Tibial artery (tissue), 4 donors: ENCODE measurements at regions of chr10 and their contacts with region 1.

Region 1: DNA sequence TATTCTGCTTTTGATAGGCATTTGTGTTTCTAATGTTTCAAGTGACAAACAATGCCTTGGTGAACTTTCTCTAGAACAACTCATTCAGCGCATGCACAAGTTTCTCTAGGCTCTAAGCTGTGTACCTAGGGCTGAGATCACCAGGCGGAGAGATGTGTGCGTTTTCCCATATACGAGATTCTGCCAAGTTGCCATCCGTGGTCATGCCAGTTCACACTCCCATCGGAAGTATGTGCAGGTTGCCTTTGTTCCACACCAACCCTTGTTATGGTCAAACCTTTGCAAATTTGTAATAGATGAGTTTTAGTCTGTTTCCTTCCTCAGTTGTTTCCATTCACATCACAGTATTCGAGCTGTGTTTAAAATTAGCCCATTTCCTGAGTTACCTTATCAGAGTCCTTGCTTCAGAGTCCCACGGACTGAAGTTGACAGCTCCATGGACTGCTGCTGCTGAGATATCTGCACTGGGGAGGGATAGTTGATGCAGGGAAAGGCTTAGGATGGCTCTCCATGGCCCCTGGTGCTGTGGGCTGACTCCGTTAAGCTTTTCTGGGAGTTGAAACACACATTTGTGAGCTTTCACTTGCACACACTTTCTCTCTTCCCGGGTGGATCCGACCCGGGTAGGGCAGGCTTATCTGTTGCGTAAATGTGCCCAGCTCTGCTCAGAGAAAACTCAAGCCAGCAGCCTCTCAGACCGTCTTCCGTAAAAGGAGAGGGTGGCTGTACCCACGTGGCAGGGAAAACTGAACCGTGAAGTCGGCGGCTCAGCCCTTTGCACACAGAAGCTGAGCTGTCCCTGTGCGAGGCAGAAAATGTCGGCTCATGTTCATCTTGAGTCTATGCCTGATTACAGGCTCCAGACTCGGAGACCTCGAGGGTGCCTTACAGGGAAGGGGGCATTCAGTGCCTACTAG is 49.4 kb downstream of the HK1 start:
- DNase-seq: peak; percentile 77 to 93
- H3K4me3 ChIP-seq: peak overlapping the region; percentile 36 to 45
- H3K27ac ChIP-seq: peak overlapping the region; percentile 79 to 87
- H3K4me1 ChIP-seq: peaks cover 4 to 98% (median 63%) of the 10 kb centered on the region in 4 donors
- H3K27me3 ChIP-seq: no peaks in the 10 kb centered on the region
- CTCF ChIP-seq: no peak

Region 2: GRCh38 chr10:69360485-69361324 is 33.0 kb after region 1 on chr10:
- intact Hi-C with region 1: loop called (anchors 5 kb)
- DNase-seq: peak; percentile 83 to 92
- H3K4me3 ChIP-seq: no peak overlapping the region
- H3K27ac ChIP-seq: peak overlapping the region; percentile 86 to 87
- H3K4me1 ChIP-seq: peaks cover 6 to 81% (median 60%) of the 10 kb centered on the region in 4 donors
- H3K27me3 ChIP-seq: no peaks in the 10 kb centered on the region
- CTCF ChIP-seq: no peak